ENCODE measurements at regions of chr15 and their contacts with region 1.

Region 1: DNA sequence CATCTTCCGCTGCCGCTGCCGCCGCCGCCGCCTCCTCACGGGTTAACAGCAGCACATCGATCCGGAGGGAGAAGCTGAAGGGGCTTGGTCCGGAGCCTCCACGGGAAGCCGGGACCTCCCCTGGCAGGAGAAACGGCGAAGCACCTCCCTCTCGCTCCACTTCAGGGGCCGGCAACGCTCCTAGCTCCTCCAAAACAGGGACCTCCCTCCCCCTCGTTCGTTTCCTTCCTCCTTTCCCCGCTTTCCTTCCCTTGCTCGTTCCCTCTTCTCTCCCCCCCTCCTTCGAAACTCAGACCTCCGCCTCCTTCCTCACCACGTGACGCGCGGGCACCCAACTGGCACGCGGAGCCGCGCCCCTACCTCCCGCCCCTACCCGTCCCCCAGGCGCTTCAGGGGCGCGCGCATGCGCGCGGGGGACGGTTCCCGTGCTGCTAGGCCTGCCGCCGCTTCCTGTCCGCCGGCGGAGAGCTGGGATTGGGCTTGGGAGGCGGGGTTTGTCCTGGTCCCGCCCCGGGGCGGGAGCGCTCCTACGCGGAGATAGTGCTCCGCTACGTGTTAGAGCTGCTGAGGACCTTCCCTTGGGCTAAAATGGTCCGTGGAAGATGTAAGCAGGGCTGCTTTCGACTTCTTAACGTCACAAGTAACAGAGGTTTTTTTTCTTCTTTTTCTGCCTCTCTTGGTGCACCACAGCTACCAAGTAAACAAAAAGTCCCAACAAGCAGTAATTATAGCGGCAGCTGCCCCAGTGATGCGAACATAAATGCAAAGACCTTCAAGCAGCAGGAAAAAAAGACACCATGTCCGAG is at the start of gene ADAM10:
- DNase-seq: peak; percentile 99
- ATAC-seq: peak; percentile 95
- H3K4me3 Mint-ChIP-seq: peak within 1 kb of the TSS; percentile 80
- H3K27ac Mint-ChIP-seq: peak within 1 kb of the TSS; percentile 93
- H3K4me1 Mint-ChIP-seq: peaks cover 36% of the 10 kb centered on the region
- H3K27me3 Mint-ChIP-seq: no peaks in the 10 kb centered on the region
- total RNA-seq, gene ADAM10: 74.5 to 82.0 TPM

Region 2: DNA sequence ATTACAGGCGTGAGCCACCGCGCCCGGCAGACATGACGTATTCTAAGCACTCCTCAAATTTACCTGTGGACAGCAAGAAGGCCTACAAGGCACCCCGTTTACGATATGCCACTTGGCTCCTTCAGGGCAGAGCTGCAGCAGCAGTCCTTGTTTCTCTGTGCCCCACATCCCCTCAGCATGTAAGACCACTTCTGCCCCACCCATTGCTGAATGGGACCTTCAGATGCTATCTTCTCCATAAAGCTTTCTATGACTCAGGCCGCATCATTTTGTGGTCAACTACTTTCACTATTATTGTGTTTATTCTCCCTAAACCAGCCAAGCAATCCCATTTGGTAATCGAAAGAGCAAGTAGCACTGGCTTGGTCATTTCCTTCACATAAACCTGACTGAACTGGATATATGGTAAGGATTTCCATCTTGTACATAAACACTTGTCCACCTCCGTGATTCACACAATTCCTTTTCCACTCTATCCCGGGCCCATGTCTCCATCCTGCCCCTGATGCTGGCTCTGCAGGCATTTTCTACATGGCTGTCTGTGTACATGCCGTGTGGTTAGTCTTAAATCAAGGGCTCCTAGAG is 292.3 kb before region 1 on chr15:
- CTCF ChIA-PET with region 1: interaction called, 3 read pairs
- POLR2A ChIA-PET with region 1: no interaction called
- intact Hi-C with region 1: loop called in 1 of 2 experiments (anchors 5 kb)
- DNase-seq: peak; percentile 55
- ATAC-seq: peak; percentile 68
- H3K4me3 Mint-ChIP-seq: no peak overlapping the region
- H3K27ac Mint-ChIP-seq: peak overlapping the region; percentile 24
- H3K4me1 Mint-ChIP-seq: peaks cover 53% of the 10 kb centered on the region
- H3K27me3 Mint-ChIP-seq: no peaks in the 10 kb centered on the region

Region 3: DNA sequence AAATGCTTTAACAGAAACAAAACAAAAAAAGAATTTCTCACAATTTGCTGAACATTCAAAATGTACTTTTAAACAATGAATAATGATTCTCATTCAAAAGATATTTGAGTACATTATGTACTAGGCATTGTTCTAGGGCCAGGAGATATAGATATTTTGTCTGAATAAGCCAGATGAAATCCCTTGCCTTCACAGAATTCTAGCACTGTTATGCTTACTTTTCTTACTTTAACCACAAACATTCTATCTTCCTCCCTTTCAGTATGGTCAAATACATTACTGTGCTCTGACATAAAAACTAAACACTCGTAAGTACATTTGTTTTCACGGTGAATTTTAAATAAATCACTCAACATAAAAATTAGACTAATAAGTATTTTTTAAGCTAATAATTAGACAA is 116.9 kb before region 1 on chr15:
- CTCF ChIA-PET with region 1: no interaction called
- POLR2A ChIA-PET with region 1: no interaction called
- intact Hi-C with region 1: loop called in 1 of 2 experiments (anchors 5 kb)
- DNase-seq: no peak
- ATAC-seq: no peak
- H3K4me3 Mint-ChIP-seq: no peak overlapping the region
- H3K27ac Mint-ChIP-seq: no peak overlapping the region
- H3K4me1 Mint-ChIP-seq: peaks cover 28% of the 10 kb centered on the region
- H3K27me3 Mint-ChIP-seq: no peaks in the 10 kb centered on the region

Region 4: DNA sequence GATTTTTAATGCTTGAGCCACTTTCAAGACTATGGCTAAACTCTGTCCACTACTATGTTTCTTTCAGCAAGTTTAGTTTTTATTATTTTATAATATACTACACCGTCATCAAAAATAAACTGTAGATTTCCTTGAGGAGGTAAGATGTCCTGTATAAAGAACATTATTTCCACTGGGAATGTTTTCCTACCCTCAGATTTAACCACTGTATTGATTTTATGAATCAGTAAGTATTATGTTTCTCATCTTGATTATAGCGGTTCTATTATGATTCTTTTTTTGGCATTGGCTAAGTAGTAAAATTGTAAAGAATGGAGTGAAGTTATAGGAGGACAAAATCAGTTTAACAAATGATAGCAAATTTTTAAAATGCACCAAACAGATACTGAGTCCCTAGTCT is 44.6 kb before region 1 on chr15:
- CTCF ChIA-PET with region 1: no interaction called
- POLR2A ChIA-PET with region 1: no interaction called
- intact Hi-C with region 1: loop called in 1 of 2 experiments (anchors 5 kb)
- DNase-seq: no peak
- ATAC-seq: no peak
- H3K4me3 Mint-ChIP-seq: no peak overlapping the region
- H3K27ac Mint-ChIP-seq: no peak overlapping the region
- H3K4me1 Mint-ChIP-seq: peaks cover 54% of the 10 kb centered on the region
- H3K27me3 Mint-ChIP-seq: no peaks in the 10 kb centered on the region

Region 5: GRCh38 chr15:58770857-58771620 is 21.3 kb after region 1 on chr15 and contains the start of gene MINDY2:
- CTCF ChIA-PET with region 1: interaction called, 25 read pairs
- POLR2A ChIA-PET with region 1: interaction called, 42 read pairs
- intact Hi-C with region 1: loop called (anchors 1 kb)
- DNase-seq: peak; percentile 97
- ATAC-seq: peak; percentile 96
- H3K4me3 Mint-ChIP-seq: no peak within 1 kb of the TSS
- H3K27ac Mint-ChIP-seq: peak within 1 kb of the TSS; percentile 88
- H3K4me1 Mint-ChIP-seq: peaks cover 12% of the 10 kb centered on the region
- H3K27me3 Mint-ChIP-seq: no peaks in the 10 kb centered on the region
- total RNA-seq, gene MINDY2: 8.2 to 9.2 TPM

Region 6: GRCh38 chr15:58805095-58805494 is 55.4 kb after region 1 on chr15:
- CTCF ChIA-PET with region 1: no interaction called
- POLR2A ChIA-PET with region 1: no interaction called
- intact Hi-C with region 1: no loop called
- DNase-seq: no peak
- ATAC-seq: no peak
- H3K4me3 Mint-ChIP-seq: no peak overlapping the region
- H3K27ac Mint-ChIP-seq: no peak overlapping the region
- H3K4me1 Mint-ChIP-seq: peaks cover 4% of the 10 kb centered on the region
- H3K27me3 Mint-ChIP-seq: no peaks in the 10 kb centered on the region

Region 7: GRCh38 chr15:59656897-59657634 is 907.3 kb after region 1 on chr15 and contains the start of gene GTF2A2:
- CTCF ChIA-PET with region 1: no interaction called
- POLR2A ChIA-PET with region 1: no interaction called
- intact Hi-C with region 1: loop called in 1 of 2 experiments (anchors 5 kb)
- DNase-seq: peak; percentile 97
- ATAC-seq: peak; percentile 100
- H3K4me3 Mint-ChIP-seq: no peak within 1 kb of the TSS
- H3K27ac Mint-ChIP-seq: peak within 1 kb of the TSS; percentile 89
- H3K4me1 Mint-ChIP-seq: peaks cover 10% of the 10 kb centered on the region
- H3K27me3 Mint-ChIP-seq: no peaks in the 10 kb centered on the region
- total RNA-seq, gene GTF2A2: 167 to 198 TPM